Prostate gland (tissue), 2 donors: ENCODE measurements at regions of chr16 and their contacts with region 1.

Region 1: DNA sequence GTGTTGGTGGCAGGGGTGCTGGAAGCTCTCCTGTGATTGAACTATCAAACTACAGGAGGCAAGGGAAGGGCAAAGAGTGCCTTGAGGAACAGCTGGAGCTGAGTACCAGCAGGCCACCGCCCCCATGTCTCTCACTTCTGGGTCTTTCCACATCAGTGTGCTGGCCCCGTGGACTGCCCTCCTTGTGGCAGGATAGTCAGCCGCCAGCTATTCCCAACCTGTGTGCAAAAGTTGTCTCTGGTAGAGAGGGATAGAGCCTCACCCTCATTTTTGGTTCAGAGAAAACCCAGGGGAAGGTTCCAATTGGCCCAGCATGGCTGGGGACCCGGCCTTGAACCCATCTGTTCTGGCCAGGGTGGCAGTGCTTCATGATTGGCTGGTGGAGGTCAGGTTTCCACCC is 211.8 kb downstream of the IRF8 start:
- DNase-seq: no peak
- H3K4me3 ChIP-seq: no peak overlapping the region
- H3K27ac ChIP-seq: no peak overlapping the region
- H3K4me1 ChIP-seq: no peaks in the 10 kb centered on the region
- H3K27me3 ChIP-seq: no peaks in the 10 kb centered on the region
- CTCF ChIP-seq: no peak
- POLR2A ChIP-seq: no peak

Region 2: GRCh38 chr16:85878874-85879273 is 231.9 kb before region 1 on chr16:
- intact Hi-C with region 1: no loop called
- DNase-seq: no peak
- H3K4me3 ChIP-seq: no peak overlapping the region
- H3K27ac ChIP-seq: no peak overlapping the region
- H3K4me1 ChIP-seq: no peaks in the 10 kb centered on the region
- H3K27me3 ChIP-seq: peaks cover 7% of the 10 kb centered on the region
- CTCF ChIP-seq: no peak
- POLR2A ChIP-seq: no peak

Region 3: GRCh38 chr16:86044241-86044671 is 66.5 kb before region 1 on chr16:
- intact Hi-C with region 1: no loop called
- DNase-seq: no peak
- H3K4me3 ChIP-seq: no peak overlapping the region
- H3K27ac ChIP-seq: no peak overlapping the region
- H3K4me1 ChIP-seq: no peaks in the 10 kb centered on the region
- H3K27me3 ChIP-seq: peaks cover 12% of the 10 kb centered on the region
- CTCF ChIP-seq: peak in 1 of 4 experiments; percentile 20
- POLR2A ChIP-seq: no peak

Region 4: GRCh38 chr16:86072328-86073102 is 38.2 kb before region 1 on chr16:
- intact Hi-C with region 1: no loop called
- DNase-seq: peak; percentile 53
- H3K4me3 ChIP-seq: no peak overlapping the region
- H3K27ac ChIP-seq: no peak overlapping the region
- H3K4me1 ChIP-seq: no peaks in the 10 kb centered on the region
- H3K27me3 ChIP-seq: no peaks in the 10 kb centered on the region
- CTCF ChIP-seq: peak; percentile 47 to 75 (median 65)
- POLR2A ChIP-seq: no peak

Region 5: DNA sequence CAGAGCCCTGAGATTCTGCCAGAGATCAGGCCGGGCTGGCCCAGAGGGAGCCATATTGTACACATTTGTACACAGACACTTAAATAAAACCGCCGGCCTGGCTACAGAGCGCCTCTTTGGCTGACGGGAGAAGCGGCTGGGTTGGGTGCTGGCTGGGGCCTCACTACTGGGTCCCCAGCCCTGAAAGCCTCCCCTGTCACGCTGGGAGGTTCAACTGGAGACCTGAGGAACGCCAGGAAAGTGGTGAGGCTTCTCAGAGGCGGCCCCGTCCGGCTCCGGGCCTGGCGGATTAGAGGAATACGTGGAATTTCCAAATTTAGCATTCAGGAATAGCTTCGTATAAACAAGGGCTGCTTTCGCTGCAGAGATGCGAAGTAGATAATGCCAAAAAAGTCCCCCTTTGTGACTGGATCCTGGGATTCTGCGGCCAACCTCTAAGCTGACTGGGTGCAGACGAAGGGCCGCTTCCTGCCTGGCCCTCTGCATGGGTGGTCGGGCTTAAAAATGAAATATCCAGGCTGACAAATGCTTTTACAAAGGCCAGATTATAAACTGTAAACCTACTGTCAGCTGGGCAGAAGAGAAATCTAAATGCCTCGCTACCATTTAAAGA is 40.6 kb after region 1 on chr16:
- intact Hi-C with region 1: loop called (anchors 5 kb)
- DNase-seq: no peak
- H3K4me3 ChIP-seq: no peak overlapping the region
- H3K27ac ChIP-seq: peak overlapping the region; percentile 28 to 64
- H3K4me1 ChIP-seq: no peaks in the 10 kb centered on the region
- H3K27me3 ChIP-seq: peaks cover 2% of the 10 kb centered on the region
- CTCF ChIP-seq: no peak
- POLR2A ChIP-seq: no peak